ENCODE measurements at regions of chr3 and their contacts with region 1.

Region 1: GRCh38 chr3:183492681-183493149 is 62.8 kb downstream of the KLHL6 start:
- DNase-seq: no peak
- H3K4me3 ChIP-seq: no peak overlapping the region
- H3K27ac ChIP-seq: no peak overlapping the region
- H3K4me1 ChIP-seq: peaks cover 0 to 19% (median 5%) of the 10 kb centered on the region in 4 donors
- H3K27me3 ChIP-seq: no peaks in the 10 kb centered on the region
- CTCF ChIP-seq: no peak
- EP300 ChIP-seq: no peak
- POLR2A ChIP-seq: no peak

Region 2: GRCh38 chr3:183085634-183086390 is 406.9 kb before region 1 on chr3:
- in situ Hi-C with region 1: no loop called
- intact Hi-C with region 1: no loop called
- DNase-seq: no peak
- H3K4me3 ChIP-seq: no peak overlapping the region
- H3K27ac ChIP-seq: no peak overlapping the region
- H3K4me1 ChIP-seq: no peaks in the 10 kb centered on the region
- H3K27me3 ChIP-seq: no peaks in the 10 kb centered on the region
- CTCF ChIP-seq: peak in 4 of 5 experiments; percentile 10 to 19 (median 16)
- EP300 ChIP-seq: no peak
- POLR2A ChIP-seq: no peak

Region 3: DNA sequence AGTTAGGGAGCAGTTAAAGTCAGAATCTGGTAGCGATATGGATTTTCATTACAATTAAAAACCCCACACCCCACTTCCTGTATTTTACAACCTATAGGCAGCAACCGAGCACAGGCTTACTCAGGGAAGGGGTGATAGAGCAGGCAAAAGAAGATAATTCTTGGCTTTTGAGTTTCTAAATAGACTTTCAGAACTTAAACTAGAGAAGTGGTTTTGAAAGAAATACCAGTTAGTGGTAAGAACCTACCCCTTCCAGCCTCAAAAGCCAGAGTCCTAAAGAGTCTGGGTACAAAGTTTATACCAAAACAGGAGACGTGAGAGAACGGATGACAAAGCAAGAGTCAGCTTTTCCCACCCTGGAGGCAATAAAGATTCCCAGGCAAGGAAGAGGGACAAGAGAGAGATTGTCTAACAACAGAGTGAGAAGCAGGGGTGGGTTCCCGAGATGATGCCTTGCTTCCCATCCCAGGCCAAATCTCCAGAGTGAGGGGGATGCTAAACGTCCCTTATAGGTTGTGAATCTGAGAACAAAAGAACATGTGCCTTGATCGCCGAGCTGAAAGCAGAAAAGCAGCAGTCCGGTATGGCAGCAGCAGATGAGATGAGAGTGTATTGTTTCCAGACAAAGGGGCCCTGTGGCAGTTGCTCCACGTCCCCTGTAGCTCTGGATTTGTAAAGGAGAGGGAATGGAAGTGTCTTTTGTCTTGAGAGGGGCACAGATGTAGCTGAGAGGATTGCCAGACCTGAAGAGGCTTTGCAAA is 26.0 kb after region 1 on chr3:
- in situ Hi-C with region 1: no loop called
- intact Hi-C with region 1: loop called (anchors 1 kb)
- DNase-seq: no peak
- H3K4me3 ChIP-seq: no peak overlapping the region
- H3K27ac ChIP-seq: peak overlapping the region in 2 of 4 donors; percentile 30 to 65
- H3K4me1 ChIP-seq: peaks cover 0 to 7% (median 0%) of the 10 kb centered on the region in 4 donors
- H3K27me3 ChIP-seq: no peaks in the 10 kb centered on the region
- CTCF ChIP-seq: no peak
- EP300 ChIP-seq: no peak
- POLR2A ChIP-seq: no peak

Measured in transverse colon (tissue), 4 donors.